SK-N-SH (cell line): ENCODE measurements at regions of chr14 and their contacts with region 1.

Region 1: GRCh38 chr14:99899578-99900178 is 106.5 kb downstream of the EML1 start:
- DNase-seq: peak; percentile 28
- H3K4me3 ChIP-seq: no peak overlapping the region; a peak in 1 of 4 replicates
- H3K27ac ChIP-seq: no peak overlapping the region
- H3K4me1 ChIP-seq: no peaks in the 10 kb centered on the region; a peak in 1 of 4 replicates
- H3K27me3 ChIP-seq: no peaks in the 10 kb centered on the region
- CTCF ChIP-seq: peak; percentile 72
- EP300 ChIP-seq: no peak
- RAD21 ChIP-seq: peak; percentile 13; the same call in 1 of the 2 replicates

Region 2: DNA sequence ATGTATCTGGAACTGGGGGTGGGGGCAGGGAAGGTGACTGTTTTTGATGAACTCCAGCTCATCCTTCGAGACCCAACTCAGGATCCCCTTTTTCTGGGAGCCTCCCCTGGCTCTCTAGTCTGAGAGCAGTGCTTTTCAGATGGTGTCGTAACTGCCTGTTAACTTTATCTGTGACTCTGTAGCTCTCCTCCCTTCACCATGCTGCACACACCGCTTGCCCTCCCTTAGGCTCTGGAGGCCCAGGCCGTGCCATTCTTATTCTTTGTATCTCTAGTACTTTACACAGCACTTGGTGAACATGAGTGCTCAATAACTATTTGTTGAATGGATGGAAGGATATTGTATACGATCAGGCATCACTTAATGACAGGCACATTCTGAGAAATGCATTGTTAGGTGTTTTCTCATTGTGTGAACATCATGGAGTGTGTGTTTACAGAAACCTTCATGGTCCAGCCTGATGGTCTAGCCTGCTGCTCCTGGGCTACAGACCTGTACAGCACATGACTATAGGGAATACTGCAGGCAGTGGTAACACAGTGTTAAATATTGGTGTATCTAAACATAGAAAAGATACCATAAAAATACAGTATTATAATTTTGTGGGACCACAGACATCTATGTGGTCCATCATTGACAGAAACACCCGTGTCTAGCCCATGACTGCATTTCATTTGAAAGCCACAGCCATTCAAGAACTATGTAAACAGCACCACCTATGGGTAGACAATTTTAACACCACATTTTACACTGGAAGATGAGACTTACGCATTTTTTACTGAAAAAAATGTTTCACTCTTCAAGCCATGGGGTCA is 14.6 kb before region 1 on chr14:
- CTCF ChIA-PET with region 1: interaction called, 40 read pairs
- POLR2A ChIA-PET with region 1: no interaction called
- DNase-seq: peak; percentile 69
- H3K4me3 ChIP-seq: no peak overlapping the region; a peak in 1 of 4 replicates
- H3K27ac ChIP-seq: no peak overlapping the region
- H3K4me1 ChIP-seq: peaks cover 4 to 5% of the 10 kb centered on the region in 2 experiments; a peak in 3 of 4 replicates
- H3K27me3 ChIP-seq: no peaks in the 10 kb centered on the region
- CTCF ChIP-seq: peak; percentile 89
- EP300 ChIP-seq: no peak
- RAD21 ChIP-seq: peak; percentile 96

Region 3: GRCh38 chr14:99915305-99916090 is 15.8 kb after region 1 on chr14:
- CTCF ChIA-PET with region 1: interaction called, 20 read pairs
- POLR2A ChIA-PET with region 1: no interaction called
- DNase-seq: no peak
- H3K4me3 ChIP-seq: no peak overlapping the region
- H3K27ac ChIP-seq: no peak overlapping the region
- H3K4me1 ChIP-seq: peaks cover 4 to 6% of the 10 kb centered on the region in 2 experiments
- H3K27me3 ChIP-seq: no peaks in the 10 kb centered on the region
- CTCF ChIP-seq: no peak
- EP300 ChIP-seq: no peak
- RAD21 ChIP-seq: no peak